PC-3 (cell line): ENCODE measurements at regions of chr10 and their contacts with region 1.

Region 1: DNA sequence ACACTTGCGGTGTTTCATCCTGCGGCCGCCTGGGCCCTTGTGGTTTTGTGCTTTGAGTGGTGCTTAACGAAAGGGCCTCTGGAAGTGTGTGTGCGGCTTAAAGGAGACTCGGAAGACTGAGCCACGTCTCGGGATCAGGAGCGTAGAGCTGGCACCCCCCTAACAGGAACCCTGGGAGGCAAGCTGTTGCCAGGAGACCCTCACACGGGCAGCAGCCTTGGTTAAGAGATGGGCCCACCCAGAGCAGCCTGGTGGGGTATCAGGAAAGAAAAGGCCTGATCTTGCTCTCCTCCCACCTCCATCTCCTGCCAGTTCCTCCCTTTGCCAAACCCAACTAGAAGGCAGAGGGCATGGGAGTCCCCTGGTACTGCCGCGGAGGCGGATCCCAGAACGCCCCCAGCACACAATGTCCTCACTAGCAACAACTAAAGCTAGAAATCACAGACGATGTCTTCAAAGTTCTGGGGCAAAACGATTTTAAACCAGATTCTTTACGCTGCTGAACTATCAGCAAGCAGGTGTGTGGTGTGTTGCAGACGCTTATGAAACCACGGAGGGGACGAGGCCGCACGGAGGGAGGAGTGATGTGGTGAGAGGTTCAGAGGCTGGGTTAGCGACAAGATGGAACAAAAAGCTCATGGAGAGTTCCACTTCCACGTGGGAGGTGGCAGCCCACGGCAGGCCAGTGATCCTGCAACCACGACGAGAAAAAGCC is 67.0 kb upstream of the INPP5A start:
- DNase-seq: no peak
- ATAC-seq: no peak
- H3K4me3 ChIP-seq: no peak overlapping the region
- H3K27ac ChIP-seq: no peak overlapping the region
- H3K4me1 ChIP-seq: no peaks in the 10 kb centered on the region
- H3K27me3 ChIP-seq: no peaks in the 10 kb centered on the region
- CTCF ChIP-seq: no peak

Region 2: GRCh38 chr10:132482090-132482800 is 11.7 kb after region 1 on chr10:
- CTCF ChIA-PET with region 1: no interaction called
- POLR2A ChIA-PET with region 1: no interaction called
- intact Hi-C with region 1: no loop called
- DNase-seq: peak; percentile 32
- ATAC-seq: no peak
- H3K4me3 ChIP-seq: no peak overlapping the region
- H3K27ac ChIP-seq: no peak overlapping the region
- H3K4me1 ChIP-seq: no peaks in the 10 kb centered on the region
- H3K27me3 ChIP-seq: no peaks in the 10 kb centered on the region
- CTCF ChIP-seq: no peak

Region 3: DNA sequence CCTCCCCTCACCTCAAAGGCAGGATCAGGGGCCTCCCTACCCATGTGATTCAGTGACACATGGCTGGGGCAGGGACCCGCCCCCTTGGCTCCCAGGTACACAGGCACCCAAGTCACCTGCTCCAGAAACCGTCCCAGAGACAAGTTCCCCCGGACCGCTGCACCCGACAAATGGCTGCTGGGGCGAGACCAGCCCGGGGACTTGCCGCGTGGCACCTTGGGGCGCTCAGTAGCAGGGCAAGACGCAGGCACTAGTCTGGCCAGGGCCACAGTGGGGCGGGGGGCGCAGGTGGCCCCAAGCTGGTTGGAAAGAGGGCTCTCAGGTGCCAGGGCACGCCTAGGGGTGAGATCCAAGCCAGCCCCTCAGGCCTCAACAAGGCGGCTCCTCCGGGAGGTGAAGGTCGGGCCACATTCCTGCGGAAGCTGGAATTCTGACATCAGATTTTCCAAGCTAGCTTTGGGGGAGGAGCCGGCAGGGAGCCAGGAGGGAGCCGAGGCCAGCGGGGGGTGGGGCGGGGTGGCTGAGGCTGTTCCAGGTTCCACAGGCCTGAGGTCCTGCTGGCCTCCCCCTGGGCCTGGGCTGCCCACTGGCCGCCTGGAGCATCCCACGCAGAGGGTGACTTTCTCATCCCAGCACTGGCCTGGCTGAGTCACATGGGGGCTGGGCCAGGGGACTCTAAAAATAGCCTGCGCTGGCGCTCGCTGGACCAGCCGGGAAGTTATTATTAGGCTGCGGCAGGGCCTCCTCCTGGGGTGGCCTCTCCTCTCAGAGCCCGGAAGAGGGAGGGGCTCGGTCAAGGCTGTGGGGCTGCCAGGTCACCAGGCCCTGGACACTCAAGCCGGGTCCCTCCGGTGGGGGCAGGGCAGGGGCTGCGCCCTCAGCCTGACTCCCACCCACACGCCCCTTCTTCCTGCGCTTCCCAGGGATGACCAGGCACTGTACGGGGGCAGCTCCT is 46.5 kb after region 1 on chr10:
- CTCF ChIA-PET with region 1: no interaction called
- POLR2A ChIA-PET with region 1: no interaction called
- intact Hi-C with region 1: loop called (anchors 5 kb)
- DNase-seq: peak; percentile 75
- ATAC-seq: peak; percentile 84
- H3K4me3 ChIP-seq: peak overlapping the region; percentile 21; the same call in 1 of the 2 replicates
- H3K27ac ChIP-seq: peak overlapping the region; percentile 72
- H3K4me1 ChIP-seq: peaks cover 30% of the 10 kb centered on the region
- H3K27me3 ChIP-seq: no peaks in the 10 kb centered on the region
- CTCF ChIP-seq: no peak